GM23248 (cell line): ENCODE measurements at regions of chr12 and their contacts with region 1.

Region 1: GRCh38 chr12:117836999-117837736 is 131.6 kb downstream of the KSR2 start:
- DNase-seq: peak; percentile 78
- H3K4me3 ChIP-seq: no peak overlapping the region
- H3K27ac ChIP-seq: no peak overlapping the region
- H3K4me1 ChIP-seq: peaks cover 16% of the 10 kb centered on the region
- H3K27me3 ChIP-seq: peaks cover 8% of the 10 kb centered on the region

Region 2: GRCh38 chr12:117367011-117367638 is 470.0 kb before region 1 on chr12:
- in situ Hi-C with region 1: loop called (anchors 10 kb)
- DNase-seq: peak; percentile 63
- H3K4me3 ChIP-seq: no peak overlapping the region
- H3K27ac ChIP-seq: no peak overlapping the region
- H3K4me1 ChIP-seq: no peaks in the 10 kb centered on the region
- H3K27me3 ChIP-seq: peaks cover 23% of the 10 kb centered on the region; the same call in 1 of the 2 replicates

Region 3: DNA sequence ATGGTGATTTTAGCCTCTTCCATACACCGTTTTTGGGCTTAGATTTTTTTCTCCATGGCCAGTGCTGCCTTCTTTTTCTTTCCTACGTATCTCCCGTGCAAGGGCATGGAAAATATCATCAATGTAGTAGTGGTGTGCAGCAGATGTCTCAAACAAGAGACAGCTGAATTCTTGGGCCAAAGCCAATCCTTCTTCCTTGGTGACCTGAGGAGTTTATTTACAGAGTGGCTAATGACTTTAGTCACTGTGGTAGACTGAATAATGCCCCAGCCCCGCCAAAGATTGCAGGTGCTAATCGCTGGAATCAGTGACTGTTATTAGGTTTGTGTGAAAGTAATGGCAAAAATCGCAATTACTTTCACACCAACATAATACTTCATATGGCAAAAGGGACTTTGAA is 240.2 kb before region 1 on chr12:
- in situ Hi-C with region 1: loop called (anchors 10 kb)
- DNase-seq: no peak
- H3K4me3 ChIP-seq: no peak overlapping the region
- H3K27ac ChIP-seq: no peak overlapping the region
- H3K4me1 ChIP-seq: no peaks in the 10 kb centered on the region
- H3K27me3 ChIP-seq: no peaks in the 10 kb centered on the region